GM12878 (cell line): ENCODE measurements at regions of chr9 and their contacts with region 1.

Region 1: GRCh38 chr9:108565651-108566378 is 290.0 kb downstream of the ACTL7B start:
- DNase-seq: peak; percentile 3
- ATAC-seq: peak; percentile 93
- H3K4me3 ChIP-seq: no peak overlapping the region
- H3K27ac ChIP-seq: no peak overlapping the region
- H3K4me1 ChIP-seq: no peaks in the 10 kb centered on the region
- H3K27me3 ChIP-seq: no peaks in the 10 kb centered on the region; a peak in 1 of 4 replicates
- CTCF ChIP-seq: peak; percentile 75 to 86 (median 80)
- EP300 ChIP-seq: no peak
- POLR2A ChIP-seq: no peak
- RAD21 ChIP-seq: peak; percentile 89

Region 2: DNA sequence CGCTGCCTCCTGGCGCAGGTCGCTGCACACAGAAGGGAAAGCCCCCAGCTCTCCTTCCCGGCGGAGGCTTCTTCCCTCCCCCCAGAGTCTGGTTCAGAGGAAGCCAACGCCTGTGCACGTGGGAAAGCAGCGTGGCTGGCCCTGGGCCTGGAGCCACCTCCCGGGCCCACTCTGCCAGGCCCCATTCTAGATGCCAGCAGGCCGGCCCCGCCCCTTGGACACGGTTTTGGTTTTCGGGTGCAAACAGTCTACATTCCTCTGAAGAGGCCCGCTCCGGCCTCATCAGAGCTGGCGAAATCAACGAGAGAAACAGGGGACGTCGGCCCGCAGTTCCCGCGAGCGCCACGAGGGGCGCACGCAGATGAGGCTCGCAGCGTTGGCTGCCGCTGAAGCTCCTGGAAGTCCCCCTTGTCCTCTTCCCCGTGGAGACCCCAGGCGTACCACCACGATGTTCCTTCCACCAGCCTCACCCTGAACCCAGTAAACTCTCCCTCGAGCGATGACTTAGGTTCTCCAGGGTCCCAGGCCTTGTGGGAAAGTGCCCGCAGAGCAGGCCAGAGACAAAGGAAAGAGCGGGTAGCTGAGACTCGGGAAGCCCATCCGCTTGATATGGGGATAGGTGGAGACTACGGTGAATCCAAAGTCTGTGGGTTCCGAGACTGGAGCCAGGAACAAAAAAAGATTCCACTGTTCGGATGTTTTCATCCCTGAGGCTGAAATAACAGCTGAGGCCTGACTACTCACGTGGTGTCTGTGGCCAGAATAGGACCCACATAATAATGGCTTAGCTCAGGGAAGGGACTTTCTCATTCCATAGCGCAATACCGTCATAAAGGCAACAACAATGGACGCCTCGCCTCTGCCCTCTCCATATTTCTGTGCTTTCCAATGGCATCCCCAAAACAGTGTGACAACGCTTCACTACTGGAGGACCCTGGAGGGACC is 1140.4 kb before region 1 on chr9:
- CTCF ChIA-PET with region 1: interaction called, 48 read pairs
- POLR2A ChIA-PET with region 1: no interaction called
- RAD21 ChIA-PET with region 1: interaction called, 9 read pairs
- SMC1A ChIA-PET with region 1: interaction called, 6 read pairs
- in situ Hi-C with region 1: loop called (anchors 10 kb)
- intact Hi-C with region 1: loop called (anchors 2 kb)
- DNase-seq: no peak
- ATAC-seq: peak; percentile 90
- H3K4me3 ChIP-seq: no peak overlapping the region
- H3K27ac ChIP-seq: no peak overlapping the region
- H3K4me1 ChIP-seq: no peaks in the 10 kb centered on the region
- H3K27me3 ChIP-seq: no peaks in the 10 kb centered on the region
- CTCF ChIP-seq: peak; percentile 67 to 97 (median 95)
- EP300 ChIP-seq: no peak
- POLR2A ChIP-seq: no peak
- RAD21 ChIP-seq: no peak

Region 3: GRCh38 chr9:107484117-107484723 is 1081.6 kb before region 1 on chr9:
- CTCF ChIA-PET with region 1: interaction called, 27 read pairs
- POLR2A ChIA-PET with region 1: no interaction called
- RAD21 ChIA-PET with region 1: interaction called, 7 read pairs
- SMC1A ChIA-PET with region 1: interaction called, 10 read pairs
- in situ Hi-C with region 1: loop called (anchors 5 kb)
- intact Hi-C with region 1: loop called (anchors 5 kb)
- DNase-seq: peak; percentile 7
- ATAC-seq: peak; percentile 91
- H3K4me3 ChIP-seq: no peak overlapping the region
- H3K27ac ChIP-seq: no peak overlapping the region
- H3K4me1 ChIP-seq: 0 out of 2 replicates have a peak, but pooled peaks cover 2% of the 10 kb centered on the region
- H3K27me3 ChIP-seq: peaks cover 4 to 15% of the 10 kb centered on the region in 2 experiments; a peak in 3 of 4 replicates
- CTCF ChIP-seq: peak; percentile 38 to 61 (median 45); a peak in 5 of 6 replicates
- EP300 ChIP-seq: no peak
- POLR2A ChIP-seq: no peak
- RAD21 ChIP-seq: peak; percentile 82

Region 4: DNA sequence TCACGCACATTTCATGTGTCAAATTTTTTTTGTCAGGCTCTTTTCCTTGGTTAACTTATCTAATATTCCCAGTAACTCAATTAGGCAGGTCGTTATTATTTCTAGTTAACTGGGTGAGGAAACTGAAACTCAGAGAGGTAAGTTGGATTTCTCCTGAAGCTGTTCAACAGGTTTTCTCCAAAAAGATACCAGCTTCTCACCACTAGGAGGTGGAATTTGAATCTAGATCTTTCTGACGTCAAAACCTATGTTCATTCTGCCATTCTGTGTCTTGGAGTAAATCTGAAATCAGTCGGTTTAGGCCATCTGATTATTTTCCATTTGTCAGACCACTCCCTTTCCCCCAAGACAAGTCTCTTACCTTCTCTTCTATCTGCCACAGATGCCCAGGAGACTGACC is 282.9 kb before region 1 on chr9:
- CTCF ChIA-PET with region 1: interaction called, 3 read pairs
- POLR2A ChIA-PET with region 1: no interaction called
- RAD21 ChIA-PET with region 1: interaction called, 3 read pairs
- SMC1A ChIA-PET with region 1: interaction called, 4 read pairs
- in situ Hi-C with region 1: no loop called
- intact Hi-C with region 1: loop called (anchors 5 kb)
- DNase-seq: no peak
- ATAC-seq: no peak
- H3K4me3 ChIP-seq: no peak overlapping the region
- H3K27ac ChIP-seq: no peak overlapping the region
- H3K4me1 ChIP-seq: no peaks in the 10 kb centered on the region
- H3K27me3 ChIP-seq: no peaks in the 10 kb centered on the region
- CTCF ChIP-seq: peak in 2 of 3 experiments; percentile 22 to 24; a peak in 1 of 6 replicates
- EP300 ChIP-seq: no peak
- POLR2A ChIP-seq: no peak
- RAD21 ChIP-seq: 0 out of 2 replicates have a peak, but pooled peaks have one; percentile 8

Region 5: GRCh38 chr9:108543251-108543768 is 22.5 kb before region 1 on chr9:
- CTCF ChIA-PET with region 1: interaction called, 10 read pairs
- POLR2A ChIA-PET with region 1: no interaction called
- RAD21 ChIA-PET with region 1: no interaction called
- SMC1A ChIA-PET with region 1: no interaction called
- in situ Hi-C with region 1: no loop called
- intact Hi-C with region 1: no loop called
- DNase-seq: no peak
- ATAC-seq: no peak
- H3K4me3 ChIP-seq: no peak overlapping the region
- H3K27ac ChIP-seq: no peak overlapping the region
- H3K4me1 ChIP-seq: no peaks in the 10 kb centered on the region
- H3K27me3 ChIP-seq: no peaks in the 10 kb centered on the region
- CTCF ChIP-seq: no peak
- EP300 ChIP-seq: no peak
- POLR2A ChIP-seq: no peak
- RAD21 ChIP-seq: no peak

Region 6: GRCh38 chr9:108612522-108612921 is 46.7 kb after region 1 on chr9:
- CTCF ChIA-PET with region 1: no interaction called
- POLR2A ChIA-PET with region 1: no interaction called
- RAD21 ChIA-PET with region 1: no interaction called
- SMC1A ChIA-PET with region 1: no interaction called
- in situ Hi-C with region 1: no loop called
- intact Hi-C with region 1: no loop called
- DNase-seq: no peak
- ATAC-seq: no peak
- H3K4me3 ChIP-seq: no peak overlapping the region
- H3K27ac ChIP-seq: no peak overlapping the region
- H3K4me1 ChIP-seq: no peaks in the 10 kb centered on the region
- H3K27me3 ChIP-seq: no peaks in the 10 kb centered on the region
- CTCF ChIP-seq: no peak
- EP300 ChIP-seq: no peak
- POLR2A ChIP-seq: no peak
- RAD21 ChIP-seq: no peak

Region 7: GRCh38 chr9:108654566-108654965 is 88.8 kb after region 1 on chr9:
- CTCF ChIA-PET with region 1: no interaction called
- POLR2A ChIA-PET with region 1: no interaction called
- RAD21 ChIA-PET with region 1: no interaction called
- SMC1A ChIA-PET with region 1: no interaction called
- in situ Hi-C with region 1: no loop called
- intact Hi-C with region 1: no loop called
- DNase-seq: no peak
- ATAC-seq: no peak
- H3K4me3 ChIP-seq: no peak overlapping the region
- H3K27ac ChIP-seq: no peak overlapping the region
- H3K4me1 ChIP-seq: no peaks in the 10 kb centered on the region
- H3K27me3 ChIP-seq: no peaks in the 10 kb centered on the region
- CTCF ChIP-seq: no peak
- EP300 ChIP-seq: no peak
- POLR2A ChIP-seq: no peak
- RAD21 ChIP-seq: no peak